Activated CD8-positive, alpha-beta T cell treated with anti-CD3 and anti-CD28 coated beads for 36 hours (primary cell): ENCODE measurements at regions of chr12 and their contacts with region 1.

Region 1: GRCh38 chr12:56007564-56008559 is 10.8 kb downstream of the SUOX start:
- DNase-seq: peak; percentile 68
- ATAC-seq: peak; percentile 84
- H3K4me3 Mint-ChIP-seq: peak overlapping the region; percentile 85
- H3K27ac Mint-ChIP-seq: peak overlapping the region; percentile 89
- H3K4me1 Mint-ChIP-seq: peaks cover 41% of the 10 kb centered on the region
- H3K27me3 Mint-ChIP-seq: no peaks in the 10 kb centered on the region
- CTCF ChIP-seq: no peak

Region 2: GRCh38 chr12:56020423-56021184 is 12.7 kb after region 1 on chr12 and contains the start of gene IKZF4:
- CTCF ChIA-PET with region 1: interaction called, 4 read pairs
- POLR2A ChIA-PET with region 1: interaction called, 15 read pairs
- intact Hi-C with region 1: no loop called
- DNase-seq: peak; percentile 43
- ATAC-seq: peak; percentile 43
- H3K4me3 Mint-ChIP-seq: peak within 1 kb of the TSS; percentile 87
- H3K27ac Mint-ChIP-seq: peak within 1 kb of the TSS; percentile 89
- H3K4me1 Mint-ChIP-seq: peaks cover 31% of the 10 kb centered on the region
- H3K27me3 Mint-ChIP-seq: no peaks in the 10 kb centered on the region
- CTCF ChIP-seq: no peak
- total RNA-seq, gene IKZF4: 20.5 to 20.8 TPM

Region 3: DNA sequence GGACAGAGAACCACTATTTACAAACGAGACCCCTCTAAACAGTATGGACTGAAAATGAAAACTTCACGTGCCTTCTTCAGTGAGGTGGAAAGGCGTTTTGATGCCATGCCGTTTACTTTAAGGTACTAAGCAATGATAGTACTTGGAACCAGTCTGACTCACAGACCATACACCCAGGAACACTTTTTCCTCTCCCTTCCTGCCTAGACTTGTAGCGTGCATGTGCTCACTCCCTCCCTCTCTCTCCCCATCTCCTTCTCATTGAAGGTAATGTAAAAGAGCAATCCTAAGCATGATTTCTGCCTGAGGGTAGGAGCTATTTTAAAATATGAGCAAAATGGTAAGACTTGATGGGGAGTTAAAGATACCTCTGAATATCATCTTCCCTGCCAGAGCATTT is 102.7 kb after region 1 on chr12:
- CTCF ChIA-PET with region 1: no interaction called
- POLR2A ChIA-PET with region 1: no interaction called
- intact Hi-C with region 1: no loop called
- DNase-seq: no peak
- ATAC-seq: no peak
- H3K4me3 Mint-ChIP-seq: no peak overlapping the region
- H3K27ac Mint-ChIP-seq: peak overlapping the region; percentile 73
- H3K4me1 Mint-ChIP-seq: peaks cover 31% of the 10 kb centered on the region
- H3K27me3 Mint-ChIP-seq: no peaks in the 10 kb centered on the region
- CTCF ChIP-seq: no peak